ENCODE measurements at regions of chr3 and their contacts with region 1.

Region 1: GRCh38 chr3:33787328-33788009 is 11.0 kb upstream of the PDCD6IP start:
- DNase-seq: no peak
- H3K4me3 ChIP-seq: peak overlapping the region in 1 of 2 donors; percentile 43
- H3K27ac ChIP-seq: no peak overlapping the region
- H3K4me1 ChIP-seq: no peaks in the 10 kb centered on the region
- H3K27me3 ChIP-seq: no peaks in the 10 kb centered on the region
- CTCF ChIP-seq: peak; percentile 27 to 70 (median 67)
- POLR2A ChIP-seq: no peak

Region 2: DNA sequence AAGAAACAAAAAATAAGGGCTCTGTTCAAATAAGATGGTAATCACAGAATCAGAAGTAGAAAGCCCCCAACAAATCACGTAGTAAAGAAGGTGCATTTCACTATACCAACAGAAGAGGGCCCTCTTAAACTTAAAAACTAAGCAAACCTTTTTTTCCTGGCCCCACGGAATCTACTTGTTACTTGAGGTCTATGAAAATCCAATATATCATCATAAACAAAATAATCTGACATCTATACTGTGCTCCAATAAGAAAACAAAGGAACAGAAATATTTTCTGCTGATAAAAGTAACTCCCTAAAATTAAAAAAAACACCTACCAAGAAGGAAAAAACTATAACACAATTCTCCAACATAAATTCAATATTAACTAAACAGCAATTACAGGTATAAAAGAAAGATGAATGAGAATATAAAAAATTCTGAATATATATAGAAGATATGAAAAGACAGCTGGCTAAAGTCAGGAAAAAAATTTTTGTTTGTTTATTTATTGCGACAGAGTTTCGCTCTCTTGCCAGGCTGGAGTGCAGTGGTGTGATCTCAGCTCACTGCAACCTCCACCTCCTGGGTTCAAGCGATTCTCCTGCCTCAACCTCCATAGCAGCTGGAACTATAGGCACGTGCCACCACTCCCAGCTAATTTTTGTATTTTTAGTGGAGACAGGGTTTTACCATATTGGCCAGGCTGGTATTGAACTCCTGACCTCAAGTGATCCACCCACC is 151.2 kb before region 1 on chr3:
- intact Hi-C with region 1: loop called (anchors 5 kb)
- DNase-seq: no peak
- H3K4me3 ChIP-seq: no peak overlapping the region
- H3K27ac ChIP-seq: no peak overlapping the region
- H3K4me1 ChIP-seq: no peaks in the 10 kb centered on the region
- H3K27me3 ChIP-seq: no peaks in the 10 kb centered on the region
- CTCF ChIP-seq: peak in 2 of 3 experiments; percentile 21 to 59
- POLR2A ChIP-seq: no peak

Measured in vagina (tissue), 2 donors.